PC-9 (cell line): ENCODE measurements at regions of chr1 and their contacts with region 1.

Region 1: DNA sequence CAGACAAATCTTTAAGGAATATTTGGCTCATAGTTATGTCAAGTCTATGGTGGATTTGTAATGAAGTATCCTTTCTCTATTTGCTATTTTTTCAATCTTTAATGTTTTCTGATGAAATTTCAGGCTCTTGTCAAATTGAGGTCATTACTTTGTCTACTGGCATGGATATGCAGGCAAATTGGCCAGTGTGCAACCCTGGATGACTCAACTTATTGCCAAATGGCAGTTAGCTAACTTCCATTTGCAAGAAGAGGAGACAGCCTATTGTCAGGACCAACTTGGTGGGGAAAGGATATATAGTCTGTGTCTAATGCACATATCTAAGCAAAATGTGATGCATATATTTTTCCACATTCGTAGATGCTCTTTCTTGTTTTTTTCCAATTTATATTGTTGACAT is 530.5 kb downstream of the PTBP2 start:
- DNase-seq: no peak
- H3K4me3 ChIP-seq: no peak overlapping the region
- H3K27ac ChIP-seq: no peak overlapping the region
- H3K4me1 ChIP-seq: no peaks in the 10 kb centered on the region
- H3K27me3 ChIP-seq: no peaks in the 10 kb centered on the region
- CTCF ChIP-seq: no peak

Region 2: DNA sequence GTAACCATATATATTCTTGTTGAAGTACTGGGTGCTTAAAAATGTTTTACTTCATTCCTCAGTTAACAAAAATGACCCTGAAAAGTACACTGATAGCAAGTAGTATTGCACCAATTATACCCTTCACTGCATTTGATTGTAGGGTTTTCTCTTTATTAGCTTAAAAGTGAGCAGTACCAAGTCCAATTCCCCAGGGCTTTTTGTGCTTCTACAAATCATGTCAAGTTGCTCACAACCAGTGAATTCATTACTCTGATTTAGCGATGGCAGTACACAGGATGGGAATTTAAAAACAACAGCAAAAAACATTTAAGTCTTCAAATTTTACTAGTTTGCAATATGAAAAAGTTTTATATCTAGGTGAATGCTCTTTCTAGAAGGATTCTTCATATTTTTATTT is 94.1 kb before region 1 on chr1:
- CTCF ChIA-PET with region 1: no interaction called
- POLR2A ChIA-PET with region 1: interaction called, 10 read pairs
- intact Hi-C with region 1: no loop called
- DNase-seq: no peak
- H3K4me3 ChIP-seq: no peak overlapping the region
- H3K27ac ChIP-seq: no peak overlapping the region
- H3K4me1 ChIP-seq: no peaks in the 10 kb centered on the region
- H3K27me3 ChIP-seq: no peaks in the 10 kb centered on the region
- CTCF ChIP-seq: no peak

Region 3: GRCh38 chr1:97297611-97298010 is 45.5 kb after region 1 on chr1:
- CTCF ChIA-PET with region 1: no interaction called
- POLR2A ChIA-PET with region 1: no interaction called
- intact Hi-C with region 1: no loop called
- DNase-seq: no peak
- H3K4me3 ChIP-seq: no peak overlapping the region
- H3K27ac ChIP-seq: no peak overlapping the region
- H3K4me1 ChIP-seq: no peaks in the 10 kb centered on the region
- H3K27me3 ChIP-seq: no peaks in the 10 kb centered on the region
- CTCF ChIP-seq: no peak